SK-N-SH (cell line): ENCODE measurements at regions of chr7 and their contacts with region 1.

Region 1: GRCh38 chr7:30757342-30757692 is 5.4 kb downstream of the INMT start:
- DNase-seq: no peak
- H3K4me3 ChIP-seq: no peak overlapping the region
- H3K27ac ChIP-seq: peak overlapping the region in 1 of 2 experiments; percentile 72; a peak in 2 of 4 replicates
- H3K4me1 ChIP-seq: peaks cover 0 to 31% of the 10 kb centered on the region in 2 experiments; a peak in 2 of 4 replicates
- H3K27me3 ChIP-seq: peaks cover 13% of the 10 kb centered on the region
- CTCF ChIP-seq: no peak
- EP300 ChIP-seq: no peak
- RAD21 ChIP-seq: no peak

Region 2: GRCh38 chr7:30771174-30771879 is 14.0 kb after region 1 on chr7 and contains the start of gene MINDY4:
- CTCF ChIA-PET with region 1: interaction called, 12 read pairs
- POLR2A ChIA-PET with region 1: interaction called, 4 read pairs
- DNase-seq: peak; percentile 99
- H3K4me3 ChIP-seq: peak within 1 kb of the TSS; percentile 85 to 91
- H3K27ac ChIP-seq: peak within 1 kb of the TSS; percentile 56 to 86
- H3K4me1 ChIP-seq: peaks cover 0 to 16% of the 10 kb centered on the region in 2 experiments; a peak in 2 of 4 replicates
- H3K27me3 ChIP-seq: no peaks in the 10 kb centered on the region
- CTCF ChIP-seq: no peak
- EP300 ChIP-seq: no peak
- RAD21 ChIP-seq: no peak
- polyA plus RNA-seq, gene MINDY4: 1.8 TPM in 2 replicates